HCT116 (cell line): ENCODE measurements at regions of chr15 and their contacts with region 1.

Region 1: DNA sequence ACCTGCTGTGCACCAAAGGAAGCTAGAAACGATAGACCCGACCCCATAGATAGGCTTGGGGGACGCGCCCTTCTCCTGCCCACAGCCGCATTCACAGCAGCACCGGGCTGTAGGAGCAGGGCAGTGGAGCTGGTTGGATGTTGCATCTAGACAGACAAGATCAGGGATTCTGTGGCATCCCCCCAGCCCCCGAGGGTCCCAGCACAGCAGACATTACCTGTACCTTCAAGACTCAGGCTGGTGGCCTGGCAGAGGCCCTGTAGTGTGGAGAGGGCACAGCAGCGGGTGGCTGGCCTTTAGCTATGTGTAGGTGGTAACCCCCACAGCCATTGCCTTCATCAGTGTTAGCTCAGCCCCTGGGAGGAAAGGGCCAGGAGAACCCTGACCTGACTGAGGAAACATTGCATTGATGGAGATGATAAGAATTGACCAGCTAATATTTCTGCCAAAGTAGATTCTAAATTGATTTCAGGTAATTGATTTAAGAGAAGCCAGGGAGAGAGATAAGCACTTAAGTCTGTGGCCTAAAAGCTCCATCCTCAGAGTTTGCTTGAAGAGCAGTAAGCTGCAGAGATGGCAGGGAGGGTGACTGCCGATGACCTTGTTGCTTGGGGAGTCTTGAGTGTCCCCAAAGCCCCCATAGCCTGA is 269.4 kb downstream of the TLE3 start:
- DNase-seq: no peak
- ATAC-seq: no peak
- H3K4me3 ChIP-seq: no peak overlapping the region
- H3K27ac ChIP-seq: no peak overlapping the region
- H3K4me1 ChIP-seq: peaks cover 2 to 3% of the 10 kb centered on the region in 2 experiments; a peak in 2 of 4 replicates
- H3K27me3 ChIP-seq: no peaks in the 10 kb centered on the region
- CTCF ChIP-seq: no peak
- POLR2A ChIP-seq: no peak
- RAD21 ChIP-seq: no peak

Region 2: GRCh38 chr15:69576035-69576526 is 252.2 kb before region 1 on chr15:
- CTCF ChIA-PET with region 1: no interaction called
- POLR2A ChIA-PET with region 1: no interaction called
- RAD21 ChIA-PET with region 1: no interaction called
- intact Hi-C with region 1: no loop called
- DNase-seq: peak; percentile 15
- ATAC-seq: peak; percentile 94
- H3K4me3 ChIP-seq: no peak overlapping the region
- H3K27ac ChIP-seq: no peak overlapping the region
- H3K4me1 ChIP-seq: no peaks in the 10 kb centered on the region
- H3K27me3 ChIP-seq: peaks cover 5% of the 10 kb centered on the region; the same call in 1 of the 2 replicates
- CTCF ChIP-seq: peak; percentile 62 to 89 (median 83); a peak in 5 of 6 replicates
- POLR2A ChIP-seq: no peak
- RAD21 ChIP-seq: peak; percentile 82

Region 3: GRCh38 chr15:69838951-69839350 is 10.6 kb after region 1 on chr15:
- CTCF ChIA-PET with region 1: no interaction called
- POLR2A ChIA-PET with region 1: no interaction called
- RAD21 ChIA-PET with region 1: no interaction called
- intact Hi-C with region 1: loop called (anchors 1 kb)
- DNase-seq: no peak
- ATAC-seq: no peak
- H3K4me3 ChIP-seq: no peak overlapping the region
- H3K27ac ChIP-seq: no peak overlapping the region
- H3K4me1 ChIP-seq: peaks cover 0 to 4% of the 10 kb centered on the region in 2 experiments; a peak in 1 of 4 replicates
- H3K27me3 ChIP-seq: peaks cover 4% of the 10 kb centered on the region; the same call in 1 of the 2 replicates
- CTCF ChIP-seq: no peak
- POLR2A ChIP-seq: no peak
- RAD21 ChIP-seq: no peak